ENCODE measurements at regions of chr20 and their contacts with region 1.

Region 1: DNA sequence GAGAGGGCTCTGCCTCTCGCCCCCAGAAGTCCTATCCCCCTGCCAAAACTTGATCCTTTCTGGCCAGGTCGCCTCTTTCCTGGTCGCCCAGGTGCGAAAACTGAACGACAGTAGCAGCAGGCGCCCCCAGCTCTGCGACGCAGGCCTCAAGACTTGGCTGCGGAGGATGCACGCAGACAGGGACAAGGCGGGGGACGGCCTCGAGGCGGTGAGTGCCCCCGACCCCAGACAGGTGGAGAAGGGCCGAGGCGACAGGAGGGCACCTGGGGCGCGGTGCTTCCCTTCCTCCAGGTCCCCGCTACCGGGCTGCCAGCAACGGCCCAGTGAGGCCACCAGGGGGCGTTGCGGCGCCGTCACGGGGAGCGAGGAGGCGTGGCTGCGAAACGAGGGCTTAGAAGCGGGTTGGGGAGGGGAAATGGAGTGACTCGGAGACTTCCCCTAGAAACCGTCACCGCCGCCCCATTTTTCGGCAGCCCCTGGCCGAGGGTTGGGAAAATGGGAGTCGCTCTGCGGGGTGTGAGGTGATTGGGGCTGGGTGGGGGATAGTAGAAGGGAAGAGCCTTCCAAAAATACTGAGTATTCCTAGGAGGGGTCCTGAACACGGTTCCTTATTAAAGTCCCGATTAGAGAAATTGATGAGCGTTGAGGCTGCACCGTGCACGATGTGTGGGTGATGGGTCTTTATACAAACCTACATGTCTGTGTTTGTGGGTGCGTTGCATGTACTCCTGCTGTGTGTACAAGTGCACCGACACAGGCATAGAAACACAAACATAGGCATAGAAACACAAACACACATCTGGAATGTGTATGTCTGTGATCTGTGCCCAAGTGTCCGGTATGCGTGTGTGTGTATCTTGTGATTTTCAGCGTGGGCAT is 44.6 kb downstream of the ARHGAP40 start:
- DNase-seq: peak; percentile 81 to 93
- ATAC-seq: peak; percentile 86
- H3K4me3 ChIP-seq: no peak overlapping the region
- H3K27ac ChIP-seq: no peak overlapping the region
- H3K4me1 ChIP-seq: no peaks in the 10 kb centered on the region
- H3K27me3 ChIP-seq: no peaks in the 10 kb centered on the region

Region 2: GRCh38 chr20:38748097-38748860 is 102.1 kb after region 1 on chr20 and contains the start of gene ACTR5:
- intact Hi-C with region 1: loop called (anchors 5 to 10 kb)
- DNase-seq: peak; percentile 95 to 99
- ATAC-seq: peak; percentile 98
- H3K4me3 ChIP-seq: peak within 1 kb of the TSS; percentile 54 to 91
- H3K27ac ChIP-seq: peak within 1 kb of the TSS; percentile 31 to 69
- H3K4me1 ChIP-seq: peaks cover 0 to 5% of the 10 kb centered on the region in 2 donors
- H3K27me3 ChIP-seq: no peaks in the 10 kb centered on the region
- total RNA-seq, gene ACTR5: 7.0 to 7.1 TPM

Region 3: DNA sequence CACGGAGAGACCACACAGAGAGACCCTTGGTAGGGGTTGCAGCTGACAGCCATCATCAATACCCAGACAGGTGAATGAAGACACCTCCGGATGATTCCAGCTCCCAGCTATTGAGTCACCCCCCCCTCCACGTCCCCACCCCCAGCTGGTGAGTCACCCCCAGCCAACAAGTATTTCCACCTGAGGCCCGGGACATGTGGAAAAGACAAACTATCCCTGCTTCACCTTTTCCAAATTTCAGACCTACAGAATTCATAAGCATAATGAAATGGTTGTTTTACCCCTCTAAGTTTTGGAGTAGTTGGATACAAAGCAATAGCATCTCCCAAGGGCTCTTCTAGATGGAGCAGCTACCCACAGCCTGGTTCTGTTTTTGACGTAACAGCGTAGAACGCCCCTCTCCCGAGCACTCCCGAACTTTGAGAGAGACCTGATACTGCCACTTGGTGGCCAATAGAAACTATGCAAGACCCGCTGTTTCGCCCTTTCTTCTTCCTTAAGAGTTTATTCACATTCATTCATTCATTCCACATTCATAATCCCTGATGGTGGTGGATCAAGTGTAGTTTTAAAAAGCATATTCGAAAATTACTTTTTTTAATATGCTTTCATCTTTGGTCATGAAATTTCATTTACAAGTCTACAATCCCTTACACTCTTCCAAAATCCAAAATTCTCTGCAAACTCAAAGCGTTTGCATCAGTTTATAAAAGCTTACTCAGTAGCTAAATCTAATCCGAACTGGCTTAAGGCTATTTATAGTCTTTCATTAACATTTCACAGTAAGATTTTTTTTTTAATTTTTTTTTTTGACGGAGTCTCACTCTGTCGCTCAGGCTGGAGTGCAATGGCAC is 144.2 kb after region 1 on chr20:
- intact Hi-C with region 1: loop called (anchors 1 to 10 kb)
- DNase-seq: no peak
- ATAC-seq: no peak
- H3K4me3 ChIP-seq: no peak overlapping the region
- H3K27ac ChIP-seq: no peak overlapping the region
- H3K4me1 ChIP-seq: no peaks in the 10 kb centered on the region
- H3K27me3 ChIP-seq: no peaks in the 10 kb centered on the region

Region 4: DNA sequence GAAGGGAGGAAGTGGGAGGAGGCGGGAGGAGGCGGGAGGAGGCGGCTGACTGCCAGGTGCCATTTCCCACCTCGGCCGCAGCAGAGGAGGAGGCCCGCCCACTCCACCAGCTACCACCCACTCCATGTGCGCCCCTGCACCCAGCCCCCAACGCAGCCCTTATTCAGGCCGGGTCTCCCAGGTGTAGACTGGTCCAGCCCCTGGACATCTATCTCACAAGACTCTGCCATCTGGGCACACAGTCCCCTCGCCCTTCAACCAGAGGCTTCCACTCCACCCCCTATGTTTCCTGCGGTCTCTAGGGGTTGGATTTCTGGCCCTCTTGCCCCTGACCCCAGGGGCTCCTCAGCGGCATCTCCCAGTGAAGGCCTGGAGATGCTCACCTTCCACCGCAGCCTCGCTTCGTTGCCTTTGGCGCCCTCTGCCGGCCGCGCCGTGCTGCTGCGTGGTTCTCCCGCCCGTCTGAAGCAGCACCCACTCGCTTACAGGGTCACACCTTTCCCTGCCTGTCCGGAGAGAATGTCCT is 247.4 kb after region 1 on chr20:
- intact Hi-C with region 1: loop called (anchors 2 to 5 kb)
- DNase-seq: peak; percentile 69 to 89
- ATAC-seq: peak; percentile 83
- H3K4me3 ChIP-seq: no peak overlapping the region
- H3K27ac ChIP-seq: no peak overlapping the region
- H3K4me1 ChIP-seq: no peaks in the 10 kb centered on the region
- H3K27me3 ChIP-seq: no peaks in the 10 kb centered on the region